Activated T-helper 1 cell treated with anti-CD3 and anti-CD28 coated beads, Interleukin-12 subunit alpha, Interleukin-12 subunit beta, Interleukin-2, Interleukin-4 antibody, amounts not matched to agents 30 ng/mL and 10 ng/mL and 1 ng/mL, durations not matched to agents 14 hours and 24 hours and 36 hours (primary cell): ENCODE measurements at regions of chr15 and their contacts with region 1.

Region 1: DNA sequence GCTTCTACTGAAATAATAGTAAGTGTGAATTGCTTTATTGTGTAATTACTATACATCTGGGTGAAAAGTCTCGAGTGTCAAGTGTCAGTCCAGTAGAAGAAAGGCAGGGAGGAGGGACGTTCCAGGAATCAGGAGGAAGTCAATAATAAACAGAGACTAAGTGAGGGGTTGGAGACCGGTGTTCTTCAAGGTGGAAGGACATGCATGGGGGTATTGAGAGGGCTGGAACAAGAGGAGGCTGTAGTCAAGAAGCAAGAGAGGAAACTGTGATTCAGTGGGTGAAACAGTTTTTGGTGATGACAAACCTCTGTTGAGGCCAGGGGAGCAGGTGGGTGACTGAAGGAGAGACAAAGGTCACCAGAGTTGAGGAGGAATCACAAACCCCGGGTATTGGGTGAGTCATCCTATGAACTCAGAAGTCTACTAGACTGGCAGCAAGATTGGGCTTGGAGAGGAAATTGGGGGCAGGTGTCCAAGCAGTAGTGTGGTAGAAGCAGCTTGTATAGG is 11.6 kb upstream of the SCAMP5 start:
- DNase-seq: no peak
- H3K4me3 Mint-ChIP-seq: peak overlapping the region; percentile 15
- H3K27ac Mint-ChIP-seq: peak overlapping the region; percentile 77
- H3K4me1 Mint-ChIP-seq: peaks cover 9% of the 10 kb centered on the region
- H3K27me3 Mint-ChIP-seq: no peaks in the 10 kb centered on the region

Region 2: GRCh38 chr15:74007820-74008371 is 975.9 kb before region 1 on chr15:
- intact Hi-C with region 1: no loop called
- DNase-seq: peak; percentile 30
- H3K4me3 Mint-ChIP-seq: peak overlapping the region; percentile 79
- H3K27ac Mint-ChIP-seq: peak overlapping the region; percentile 96
- H3K4me1 Mint-ChIP-seq: peaks cover 75% of the 10 kb centered on the region
- H3K27me3 Mint-ChIP-seq: no peaks in the 10 kb centered on the region

Region 3: GRCh38 chr15:74995241-74995778 is 11.5 kb after region 1 on chr15 and contains the start of gene SCAMP5:
- intact Hi-C with region 1: loop called (anchors 1 kb)
- DNase-seq: peak; percentile 92
- H3K4me3 Mint-ChIP-seq: peak within 1 kb of the TSS; percentile 70
- H3K27ac Mint-ChIP-seq: no peak within 1 kb of the TSS
- H3K4me1 Mint-ChIP-seq: peaks cover 4% of the 10 kb centered on the region
- H3K27me3 Mint-ChIP-seq: peaks cover 33% of the 10 kb centered on the region
- total RNA-seq, gene SCAMP5: 2.0 and 3.5 TPM in 2 replicates